Caco-2 (cell line): ENCODE measurements at regions of chr9 and their contacts with region 1.

Region 1: DNA sequence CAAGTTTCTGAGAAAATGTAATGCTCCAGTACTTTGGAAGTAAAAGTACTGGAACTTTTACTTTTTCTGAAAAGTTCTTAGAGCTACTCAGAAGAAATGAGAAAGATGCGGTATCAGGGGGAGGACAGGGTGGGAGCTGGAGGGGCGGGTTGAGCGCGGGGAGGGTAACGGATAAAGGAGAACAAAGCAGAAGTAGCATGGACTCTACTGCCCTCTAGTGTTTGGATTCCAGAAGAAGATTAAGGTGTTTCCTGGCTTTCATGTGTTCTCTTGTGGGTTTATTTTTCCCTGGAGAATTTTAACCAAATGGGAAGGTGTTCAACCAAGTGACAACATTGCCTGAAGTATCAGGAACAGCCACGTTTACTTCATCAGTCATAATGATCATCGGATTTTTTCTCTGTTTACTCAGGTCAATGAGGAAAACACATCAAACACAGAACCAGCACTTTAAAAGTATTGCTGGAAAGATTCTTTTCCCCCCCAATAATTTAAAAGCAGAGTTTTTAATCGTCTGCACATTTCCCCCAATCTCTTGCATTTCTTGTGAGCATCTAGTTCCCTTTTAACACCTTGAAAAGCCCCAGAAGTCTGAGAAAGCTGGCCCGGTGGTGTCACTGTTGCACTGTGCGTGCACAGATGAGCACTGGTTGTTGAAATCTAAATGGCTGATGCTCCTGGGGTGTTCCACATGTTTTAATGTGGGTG is 190.6 kb downstream of the MPDZ start:
- DNase-seq: peak in 1 of 2 experiments; percentile 27
- H3K4me3 ChIP-seq: no peak overlapping the region
- H3K4me3 Mint-ChIP-seq: no peak overlapping the region
- H3K27ac Mint-ChIP-seq: no peak overlapping the region
- H3K4me1 ChIP-seq: no peaks in the 10 kb centered on the region
- H3K4me1 Mint-ChIP-seq: peaks cover 6% of the 10 kb centered on the region
- H3K27me3 ChIP-seq: no peaks in the 10 kb centered on the region
- H3K27me3 Mint-ChIP-seq: peaks cover 2% of the 10 kb centered on the region
- CTCF ChIP-seq: peak; percentile 49 to 54

Region 2: GRCh38 chr9:13033959-13034693 is 54.7 kb before region 1 on chr9:
- CTCF ChIA-PET with region 1: interaction called, 3 read pairs
- POLR2A ChIA-PET with region 1: no interaction called
- intact Hi-C with region 1: loop called (anchors 1 kb)
- DNase-seq: peak; percentile 33 to 53
- H3K4me3 ChIP-seq: no peak overlapping the region
- H3K4me3 Mint-ChIP-seq: peak overlapping the region; percentile 12
- H3K27ac Mint-ChIP-seq: no peak overlapping the region
- H3K4me1 ChIP-seq: no peaks in the 10 kb centered on the region
- H3K4me1 Mint-ChIP-seq: no peaks in the 10 kb centered on the region
- H3K27me3 ChIP-seq: no peaks in the 10 kb centered on the region
- H3K27me3 Mint-ChIP-seq: peaks cover 3% of the 10 kb centered on the region
- CTCF ChIP-seq: peak; percentile 41 to 57

Region 3: GRCh38 chr9:13100914-13101572 is 12.2 kb after region 1 on chr9:
- CTCF ChIA-PET with region 1: no interaction called
- POLR2A ChIA-PET with region 1: no interaction called
- intact Hi-C with region 1: no loop called
- DNase-seq: no peak
- H3K4me3 ChIP-seq: no peak overlapping the region
- H3K4me3 Mint-ChIP-seq: no peak overlapping the region
- H3K27ac Mint-ChIP-seq: no peak overlapping the region
- H3K4me1 ChIP-seq: no peaks in the 10 kb centered on the region
- H3K4me1 Mint-ChIP-seq: no peaks in the 10 kb centered on the region
- H3K27me3 ChIP-seq: no peaks in the 10 kb centered on the region
- H3K27me3 Mint-ChIP-seq: no peaks in the 10 kb centered on the region
- CTCF ChIP-seq: no peak